Right ventricle myocardium inferior (tissue), 1 donor: ENCODE measurements at regions of chr12 and their contacts with region 1.

Region 1: DNA sequence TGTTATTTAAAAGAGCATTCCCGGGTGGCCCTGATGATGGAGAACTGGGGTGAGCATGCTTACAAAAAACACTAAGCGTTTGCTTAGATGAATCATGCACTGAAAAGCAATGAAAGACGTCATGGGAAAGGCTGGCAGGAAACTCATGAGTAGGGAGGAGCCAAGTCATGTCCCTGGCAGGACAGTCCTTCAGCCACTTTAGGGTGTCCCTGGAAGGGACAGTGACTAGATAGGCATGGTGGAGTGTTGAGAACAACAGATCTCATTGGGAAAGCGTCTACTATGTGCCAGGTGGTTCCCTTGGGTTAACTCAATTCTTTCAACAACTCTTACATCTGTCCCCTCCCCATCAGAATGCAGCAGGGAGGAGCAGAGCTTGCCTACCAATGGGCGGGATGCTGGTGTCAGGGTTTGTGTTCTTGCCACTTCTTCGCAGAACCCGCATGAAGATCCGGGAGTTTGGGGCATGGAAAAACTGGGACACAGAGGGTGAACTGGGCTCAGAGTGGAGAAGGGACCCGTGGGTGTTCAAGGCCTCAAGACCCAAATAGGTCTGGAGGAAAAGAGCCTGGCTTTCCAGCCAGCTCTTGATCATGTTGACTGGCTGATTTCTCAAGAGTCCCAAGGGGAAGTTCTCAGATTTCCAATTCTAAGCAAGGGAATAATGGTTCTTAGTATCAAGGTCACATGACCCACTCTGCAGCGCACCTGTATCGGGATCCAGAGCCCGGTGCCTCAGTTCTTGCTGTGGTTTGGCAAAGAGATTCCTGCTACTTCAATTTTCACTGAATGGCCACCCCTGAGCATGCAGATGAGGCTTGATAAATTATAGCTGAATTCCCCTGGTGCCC is 653.9 kb upstream of the TBX3 start:
- DNase-seq: no peak
- ATAC-seq: peak; percentile 77

Region 2: GRCh38 chr12:115103884-115104883 is 233.7 kb before region 1 on chr12:
- intact Hi-C with region 1: loop called (anchors 10 kb)
- DNase-seq: no peak
- ATAC-seq: peak; percentile 57